ENCODE measurements at regions of chr22 and their contacts with region 1.

Region 1: GRCh38 chr22:41666661-41667258 is 21.9 kb downstream of the SNU13 start:
- DNase-seq: peak; percentile 92 to 96
- H3K4me3 ChIP-seq: peak overlapping the region; percentile 15 to 43 (median 22); a peak in 3 of 8 replicates
- H3K27ac ChIP-seq: peak overlapping the region; percentile 84
- H3K4me1 ChIP-seq: peaks cover 0 to 8% (median 3%) of the 10 kb centered on the region in 4 experiments; a peak in 5 of 7 replicates
- H3K27me3 ChIP-seq: no peaks in the 10 kb centered on the region
- CTCF ChIP-seq: peak; percentile 91 to 100 (median 99)
- EP300 ChIP-seq: no peak
- POLR2A ChIP-seq: peak; percentile 51 to 74
- RAD21 ChIP-seq: peak; percentile 57 to 68

Region 2: GRCh38 chr22:41612603-41613306 is 54.0 kb before region 1 on chr22:
- CTCF ChIA-PET with region 1: no interaction called
- POLR2A ChIA-PET with region 1: no interaction called
- DNase-seq: no peak
- H3K4me3 ChIP-seq: no peak overlapping the region
- H3K27ac ChIP-seq: no peak overlapping the region
- H3K4me1 ChIP-seq: peaks cover 0 to under 1% (median 0%) of the 10 kb centered on the region in 4 experiments; a peak in 1 of 7 replicates
- H3K27me3 ChIP-seq: no peaks in the 10 kb centered on the region
- CTCF ChIP-seq: no peak
- EP300 ChIP-seq: no peak
- POLR2A ChIP-seq: no peak
- RAD21 ChIP-seq: no peak

Region 3: GRCh38 chr22:41656556-41656955 is 10.2 kb before region 1 on chr22:
- CTCF ChIA-PET with region 1: interaction called, 9 read pairs
- POLR2A ChIA-PET with region 1: interaction called, 34 read pairs
- DNase-seq: no peak
- H3K4me3 ChIP-seq: no peak overlapping the region
- H3K27ac ChIP-seq: no peak overlapping the region
- H3K4me1 ChIP-seq: no peaks in the 10 kb centered on the region
- H3K27me3 ChIP-seq: no peaks in the 10 kb centered on the region
- CTCF ChIP-seq: no peak
- EP300 ChIP-seq: no peak
- POLR2A ChIP-seq: no peak
- RAD21 ChIP-seq: no peak

Region 4: GRCh38 chr22:41682033-41682807 is 15.5 kb after region 1 on chr22:
- CTCF ChIA-PET with region 1: interaction called, 3 read pairs
- POLR2A ChIA-PET with region 1: interaction called, 15 read pairs
- DNase-seq: peak in 1 of 2 experiments; percentile 92
- H3K4me3 ChIP-seq: peak overlapping the region; percentile 65 to 88 (median 75)
- H3K27ac ChIP-seq: peak overlapping the region; percentile 73
- H3K4me1 ChIP-seq: no peaks in the 10 kb centered on the region; a peak in 1 of 7 replicates
- H3K27me3 ChIP-seq: no peaks in the 10 kb centered on the region
- CTCF ChIP-seq: no peak
- EP300 ChIP-seq: no peak
- POLR2A ChIP-seq: peak in 1 of 2 experiments; percentile 67; a peak in 2 of 3 replicates
- RAD21 ChIP-seq: no peak

Measured in H1 (cell line).